ENCODE measurements at regions of chr22 and their contacts with region 1.

Region 1: DNA sequence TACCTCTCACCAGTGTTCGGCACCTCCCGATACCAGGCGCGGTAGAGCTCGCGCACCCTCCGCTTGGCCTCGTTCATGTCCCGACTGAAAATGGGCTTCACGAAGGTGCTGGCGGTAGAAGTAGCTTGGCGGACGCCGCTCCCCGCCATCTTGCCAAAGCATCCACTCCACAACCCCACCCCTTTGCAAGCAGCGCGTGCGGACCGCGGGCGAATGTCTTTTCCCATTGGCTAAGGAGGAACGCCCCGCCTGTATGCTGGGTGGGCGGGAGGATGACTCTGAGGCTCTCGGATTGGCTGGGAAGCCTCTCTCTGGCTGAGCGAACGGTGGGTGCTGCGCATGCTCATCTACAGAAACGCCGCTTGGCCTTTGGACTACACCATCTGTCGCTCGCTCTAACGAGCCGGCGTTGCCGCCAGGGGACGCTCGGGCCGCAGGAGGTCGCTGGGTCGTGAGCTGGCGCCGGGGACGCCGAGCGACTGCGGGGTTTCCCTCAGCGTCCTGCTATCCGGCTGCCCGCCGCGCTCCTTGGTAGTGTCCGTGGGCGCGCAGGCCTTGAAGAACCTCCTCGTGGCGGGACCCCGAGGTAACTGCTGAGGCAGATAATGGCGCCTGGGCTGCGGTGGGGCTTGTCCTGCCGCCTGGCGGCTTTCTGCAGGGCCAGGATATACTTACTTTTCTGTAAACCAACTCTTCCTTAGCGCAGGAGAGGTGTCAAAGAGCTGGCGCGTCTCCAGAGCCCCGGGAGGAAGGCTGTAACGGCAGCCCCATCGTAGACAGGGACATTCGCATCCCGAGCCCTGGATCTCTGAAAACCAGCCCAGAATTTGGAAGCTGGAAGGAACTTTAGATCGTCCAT is at the start of gene NDUFA6:
- DNase-seq: peak; percentile 99
- H3K4me3 Mint-ChIP-seq: peak within 1 kb of the TSS; percentile 94
- H3K27ac Mint-ChIP-seq: peak within 1 kb of the TSS; percentile 100
- H3K4me1 Mint-ChIP-seq: peaks cover 27% of the 10 kb centered on the region
- H3K27me3 Mint-ChIP-seq: no peaks in the 10 kb centered on the region
- total RNA-seq, gene NDUFA6: 77.7 and 87.8 TPM in 2 replicates

Region 2: GRCh38 chr22:41752011-41752970 is 338.5 kb before region 1 on chr22:
- intact Hi-C with region 1: no loop called
- DNase-seq: no peak
- H3K4me3 Mint-ChIP-seq: no peak overlapping the region
- H3K27ac Mint-ChIP-seq: peak overlapping the region; percentile 29
- H3K4me1 Mint-ChIP-seq: no peaks in the 10 kb centered on the region
- H3K27me3 Mint-ChIP-seq: peaks cover 20% of the 10 kb centered on the region

Region 3: GRCh38 chr22:41946629-41947423 is 144.0 kb before region 1 on chr22 and contains the start of gene CENPM:
- intact Hi-C with region 1: no loop called
- DNase-seq: peak; percentile 98
- H3K4me3 Mint-ChIP-seq: peak within 1 kb of the TSS; percentile 94
- H3K27ac Mint-ChIP-seq: peak within 1 kb of the TSS; percentile 94
- H3K4me1 Mint-ChIP-seq: peaks cover 47% of the 10 kb centered on the region
- H3K27me3 Mint-ChIP-seq: no peaks in the 10 kb centered on the region
- total RNA-seq, gene CENPM: 86.9 and 88.6 TPM in 2 replicates

Region 4: GRCh38 chr22:42016101-42016500 is 74.7 kb before region 1 on chr22:
- intact Hi-C with region 1: no loop called
- DNase-seq: no peak
- H3K4me3 Mint-ChIP-seq: no peak overlapping the region
- H3K27ac Mint-ChIP-seq: no peak overlapping the region
- H3K4me1 Mint-ChIP-seq: no peaks in the 10 kb centered on the region
- H3K27me3 Mint-ChIP-seq: peaks cover 10% of the 10 kb centered on the region

Region 5: GRCh38 chr22:42039271-42039670 is 51.6 kb before region 1 on chr22:
- intact Hi-C with region 1: no loop called
- DNase-seq: no peak
- H3K4me3 Mint-ChIP-seq: no peak overlapping the region
- H3K27ac Mint-ChIP-seq: no peak overlapping the region
- H3K4me1 Mint-ChIP-seq: peaks cover 4% of the 10 kb centered on the region
- H3K27me3 Mint-ChIP-seq: peaks cover 4% of the 10 kb centered on the region

Region 6: DNA sequence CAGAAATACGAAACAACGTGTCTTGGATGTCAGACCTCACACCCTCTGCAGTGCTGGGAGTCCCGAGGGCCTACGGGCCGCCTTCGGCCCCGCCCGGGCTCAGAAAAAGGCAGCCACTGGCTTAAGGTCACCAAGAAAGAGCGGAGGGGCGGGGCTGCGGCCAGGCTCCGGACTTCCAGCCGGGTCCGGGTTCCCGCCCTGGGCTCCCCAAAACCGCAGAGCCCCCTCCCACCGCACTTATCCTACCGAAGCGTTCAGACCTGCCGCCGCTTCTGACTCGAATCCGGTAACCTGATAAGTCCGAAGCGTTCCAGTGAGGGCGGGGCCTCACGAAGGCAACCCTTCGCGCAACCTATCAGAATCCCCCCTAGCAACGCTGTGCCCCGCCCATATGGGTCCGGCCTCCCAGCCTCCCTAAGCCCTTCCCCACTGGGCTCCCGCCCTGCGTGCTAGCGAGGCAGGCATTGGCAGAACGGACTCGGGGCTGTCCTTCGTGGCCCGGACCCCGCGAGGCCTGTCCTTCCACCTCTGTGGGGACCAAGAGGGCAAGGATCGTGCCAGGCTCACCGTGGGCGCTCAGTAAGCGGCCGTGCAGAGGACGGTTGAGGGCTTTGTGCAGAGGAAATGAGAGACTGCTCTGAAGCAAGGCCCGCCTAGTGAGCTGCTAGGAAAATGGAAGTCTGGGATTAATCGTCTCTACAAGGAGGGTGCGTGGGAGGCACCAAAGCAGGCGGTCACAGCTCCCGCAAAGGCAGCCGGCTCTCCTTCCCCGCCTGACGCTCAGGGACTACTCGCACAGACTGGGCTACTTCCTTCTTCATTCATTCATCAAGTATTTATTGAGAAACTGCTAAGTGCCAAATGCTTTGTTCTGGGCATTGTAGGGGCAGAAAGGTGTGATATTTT is 20.1 kb before region 1 on chr22 and contains the start of gene NAGA:
- intact Hi-C with region 1: loop called (anchors 1 kb)
- DNase-seq: peak; percentile 98
- H3K4me3 Mint-ChIP-seq: peak within 1 kb of the TSS; percentile 93
- H3K27ac Mint-ChIP-seq: peak within 1 kb of the TSS; percentile 93
- H3K4me1 Mint-ChIP-seq: peaks cover 39% of the 10 kb centered on the region
- H3K27me3 Mint-ChIP-seq: no peaks in the 10 kb centered on the region
- total RNA-seq, gene NAGA: 28.2 and 29.9 TPM in 2 replicates

Region 7: GRCh38 chr22:42116848-42117424 is 26.1 kb after region 1 on chr22:
- intact Hi-C with region 1: loop called (anchors 2 kb)
- DNase-seq: no peak
- H3K4me3 Mint-ChIP-seq: no peak overlapping the region
- H3K27ac Mint-ChIP-seq: no peak overlapping the region
- H3K4me1 Mint-ChIP-seq: peaks cover 29% of the 10 kb centered on the region
- H3K27me3 Mint-ChIP-seq: no peaks in the 10 kb centered on the region

Region 8: GRCh38 chr22:42269407-42270177 is 178.8 kb after region 1 on chr22:
- intact Hi-C with region 1: loop called (anchors 1 kb)
- DNase-seq: peak; percentile 93
- H3K4me3 Mint-ChIP-seq: peak overlapping the region; percentile 97
- H3K27ac Mint-ChIP-seq: peak overlapping the region; percentile 81
- H3K4me1 Mint-ChIP-seq: peaks cover 30% of the 10 kb centered on the region
- H3K27me3 Mint-ChIP-seq: no peaks in the 10 kb centered on the region

Region 9: GRCh38 chr22:42437488-42438292 is 346.9 kb after region 1 on chr22:
- intact Hi-C with region 1: loop called (anchors 1 kb)
- DNase-seq: peak; percentile 96
- H3K4me3 Mint-ChIP-seq: peak overlapping the region; percentile 85
- H3K27ac Mint-ChIP-seq: peak overlapping the region; percentile 80
- H3K4me1 Mint-ChIP-seq: peaks cover 30% of the 10 kb centered on the region
- H3K27me3 Mint-ChIP-seq: peaks cover 9% of the 10 kb centered on the region

Measured in activated CD4-positive, alpha-beta T cell treated with anti-CD3 and anti-CD28 coated beads, Interleukin-2, amount 10 ng/mL, durations not matched to agents 24 days and 14 days (primary cell).